Prostate gland (tissue), 2 donors: ENCODE measurements at regions of chr9 and their contacts with region 1.

Region 1: GRCh38 chr9:27856054-27856453 is 282.8 kb upstream of the C9orf72 start:
- DNase-seq: no peak
- H3K4me3 ChIP-seq: no peak overlapping the region
- H3K27ac ChIP-seq: no peak overlapping the region
- H3K4me1 ChIP-seq: no peaks in the 10 kb centered on the region
- H3K27me3 ChIP-seq: no peaks in the 10 kb centered on the region
- CTCF ChIP-seq: no peak
- POLR2A ChIP-seq: no peak

Region 2: GRCh38 chr9:27924502-27924901 is 68.4 kb after region 1 on chr9:
- intact Hi-C with region 1: loop called (anchors 10 kb)
- DNase-seq: no peak
- H3K4me3 ChIP-seq: no peak overlapping the region
- H3K27ac ChIP-seq: no peak overlapping the region
- H3K4me1 ChIP-seq: no peaks in the 10 kb centered on the region
- H3K27me3 ChIP-seq: no peaks in the 10 kb centered on the region
- CTCF ChIP-seq: no peak
- POLR2A ChIP-seq: no peak